PC-9 (cell line): ENCODE measurements at regions of chr12 and their contacts with region 1.

Region 1: DNA sequence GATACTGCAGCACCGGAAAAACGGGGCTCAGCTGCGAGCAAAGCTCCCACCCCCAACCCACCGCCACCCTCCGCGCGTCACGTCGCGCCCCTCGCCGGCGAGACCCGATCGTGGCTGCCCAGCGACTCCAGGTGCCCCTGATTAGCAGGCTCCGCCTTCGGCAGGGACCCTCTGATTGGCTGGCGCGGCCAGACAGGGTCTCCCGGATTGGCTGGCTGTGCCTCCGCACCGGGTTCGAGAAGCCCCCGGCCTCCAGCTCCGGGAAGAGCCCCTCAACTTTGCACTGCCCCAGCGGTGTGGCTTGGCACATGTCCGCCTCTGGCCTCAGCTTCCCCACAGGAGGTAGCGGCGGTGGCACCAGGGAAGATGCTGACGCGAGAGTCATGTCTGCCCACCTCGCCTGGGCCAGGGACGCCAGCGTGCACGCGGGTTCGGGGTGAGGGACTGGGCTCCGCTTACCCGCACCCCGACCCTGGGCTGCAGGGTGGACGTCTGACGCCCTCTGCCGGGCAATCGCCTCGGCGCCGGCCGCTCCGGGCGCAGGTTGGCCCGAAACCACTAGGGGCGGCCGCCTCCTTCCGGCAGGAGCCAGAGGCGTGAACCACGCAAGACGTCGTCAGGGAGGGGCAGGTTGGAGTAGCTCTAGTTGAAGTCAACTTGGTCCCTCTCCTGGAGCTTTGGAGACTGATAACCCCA is 498 bp upstream of the RHOF start:
- DNase-seq: peak; percentile 82 to 98
- H3K4me3 ChIP-seq: peak overlapping the region; percentile 79
- H3K27ac ChIP-seq: peak overlapping the region; percentile 100
- H3K4me1 ChIP-seq: peaks cover 71% of the 10 kb centered on the region
- H3K27me3 ChIP-seq: no peaks in the 10 kb centered on the region
- CTCF ChIP-seq: peak; percentile 87

Region 2: GRCh38 chr12:121223292-121224285 is 570.4 kb before region 1 on chr12:
- CTCF ChIA-PET with region 1: no interaction called
- POLR2A ChIA-PET with region 1: no interaction called
- intact Hi-C with region 1: loop called (anchors 10 kb)
- DNase-seq: no peak
- H3K4me3 ChIP-seq: no peak overlapping the region
- H3K27ac ChIP-seq: no peak overlapping the region
- H3K4me1 ChIP-seq: peaks cover 27% of the 10 kb centered on the region
- H3K27me3 ChIP-seq: no peaks in the 10 kb centered on the region
- CTCF ChIP-seq: peak; percentile 47

Region 3: DNA sequence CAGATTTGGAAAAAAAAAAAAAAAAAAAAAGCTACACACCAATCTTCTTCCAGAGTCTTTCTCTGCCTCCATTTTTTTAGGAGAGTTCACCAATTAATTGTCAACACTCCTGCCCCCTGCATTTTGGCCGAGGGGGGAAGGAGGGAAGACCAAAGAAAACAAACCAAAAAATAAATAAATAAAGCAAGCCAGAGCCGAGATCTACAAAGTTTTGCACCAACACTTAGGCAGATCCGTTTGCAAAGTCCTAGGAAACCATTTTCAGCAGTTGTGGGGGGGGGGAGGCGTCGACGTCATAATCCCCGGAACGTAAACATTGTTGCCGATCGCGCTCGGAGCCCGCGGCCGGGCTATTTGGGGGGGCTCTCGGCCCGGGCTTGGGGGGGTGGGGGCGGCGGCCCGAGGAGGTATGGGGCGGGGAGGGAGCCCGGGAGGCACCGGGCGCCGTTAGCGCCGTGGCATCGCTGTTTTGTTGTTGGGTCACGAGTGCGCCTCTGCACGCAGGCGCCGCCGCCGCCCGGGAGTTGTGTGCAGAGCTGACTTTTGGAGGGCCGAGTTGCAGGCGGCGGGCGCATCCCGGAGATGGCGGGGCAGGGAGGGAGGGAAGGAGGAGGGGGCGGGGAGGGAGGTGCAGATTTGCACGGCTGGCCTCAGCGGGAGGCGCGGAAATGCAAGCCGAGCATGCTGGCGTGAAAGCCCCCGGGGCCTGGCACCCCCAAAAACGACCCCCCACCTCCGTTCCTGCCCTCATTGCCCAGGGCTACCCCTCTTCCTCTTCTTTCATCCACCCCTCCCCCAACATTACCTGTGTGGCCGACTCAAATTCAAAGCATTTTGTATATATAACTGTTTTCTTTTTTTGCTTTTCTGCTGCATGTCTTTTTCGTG is 213.8 kb before region 1 on chr12:
- CTCF ChIA-PET with region 1: interaction called, 12 read pairs
- POLR2A ChIA-PET with region 1: interaction called, 3 read pairs
- intact Hi-C with region 1: no loop called
- DNase-seq: peak in 1 of 2 experiments; percentile 54
- H3K4me3 ChIP-seq: peak overlapping the region; percentile 86
- H3K27ac ChIP-seq: no peak overlapping the region
- H3K4me1 ChIP-seq: peaks cover 39% of the 10 kb centered on the region
- H3K27me3 ChIP-seq: no peaks in the 10 kb centered on the region
- CTCF ChIP-seq: no peak

Region 4: GRCh38 chr12:121697098-121697698 is 96.8 kb before region 1 on chr12:
- CTCF ChIA-PET with region 1: interaction called, 10 read pairs
- POLR2A ChIA-PET with region 1: no interaction called
- intact Hi-C with region 1: loop called (anchors 1 kb)
- DNase-seq: peak in 1 of 2 experiments; percentile 13
- H3K4me3 ChIP-seq: no peak overlapping the region
- H3K27ac ChIP-seq: no peak overlapping the region
- H3K4me1 ChIP-seq: no peaks in the 10 kb centered on the region; the same call in 1 of the 2 replicates
- H3K27me3 ChIP-seq: no peaks in the 10 kb centered on the region
- CTCF ChIP-seq: peak; percentile 70

Region 5: GRCh38 chr12:121811434-121812319 is 17.7 kb after region 1 on chr12:
- CTCF ChIA-PET with region 1: interaction called, 48 read pairs
- POLR2A ChIA-PET with region 1: interaction called, 4 read pairs
- intact Hi-C with region 1: loop called (anchors 1 kb)
- DNase-seq: peak in 1 of 2 experiments; percentile 80
- H3K4me3 ChIP-seq: peak overlapping the region; percentile 65
- H3K27ac ChIP-seq: 0 out of 2 replicates have a peak overlapping the region, but pooled peaks have one; percentile 37
- H3K4me1 ChIP-seq: peaks cover 16% of the 10 kb centered on the region
- H3K27me3 ChIP-seq: no peaks in the 10 kb centered on the region
- CTCF ChIP-seq: peak; percentile 92

Region 6: DNA sequence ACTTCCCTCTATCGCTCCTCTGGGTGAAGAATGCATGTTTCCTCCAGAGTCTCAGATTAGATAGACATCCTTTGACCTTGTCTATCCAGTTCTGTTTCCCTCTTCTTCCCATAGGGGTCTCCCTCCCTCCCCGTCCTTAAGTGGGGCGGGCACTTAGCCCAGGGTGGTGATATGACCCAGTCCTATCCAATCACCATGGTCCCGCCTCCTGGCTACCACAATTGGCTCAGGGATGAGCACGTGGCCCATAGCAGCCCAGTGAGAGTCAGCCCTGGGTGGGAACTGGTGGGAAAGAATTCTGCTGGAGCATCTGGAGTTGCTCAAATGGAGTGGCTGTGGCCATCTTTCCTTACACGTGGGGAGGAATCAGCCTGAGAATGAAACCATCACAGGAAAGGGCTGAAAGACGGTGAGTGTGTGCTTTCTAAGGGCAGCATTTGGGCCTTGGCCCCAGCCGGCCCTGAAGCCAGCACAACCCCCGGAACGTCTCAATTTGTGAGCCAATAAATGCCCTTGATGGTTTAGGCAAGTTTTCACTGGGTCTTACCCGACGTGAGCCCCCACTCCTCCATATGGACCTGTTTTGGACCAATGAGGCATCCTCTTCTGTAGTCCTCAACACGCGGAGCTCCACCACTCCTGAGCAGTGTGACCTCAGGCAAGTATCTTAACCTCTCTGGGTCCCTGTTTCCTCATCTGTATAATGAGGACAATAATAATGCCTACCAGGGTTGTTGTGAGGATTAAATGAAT is 270.2 kb after region 1 on chr12:
- CTCF ChIA-PET with region 1: no interaction called
- POLR2A ChIA-PET with region 1: no interaction called
- intact Hi-C with region 1: loop called (anchors 10 kb)
- DNase-seq: peak; percentile 93 to 95
- H3K4me3 ChIP-seq: peak overlapping the region; percentile 59
- H3K27ac ChIP-seq: peak overlapping the region; percentile 88
- H3K4me1 ChIP-seq: peaks cover 39% of the 10 kb centered on the region
- H3K27me3 ChIP-seq: no peaks in the 10 kb centered on the region
- CTCF ChIP-seq: peak; percentile 61